PC-3 (cell line): ENCODE measurements at regions of chr19 and their contacts with region 1.

Region 1: GRCh38 chr19:3665681-3666544 is 34.4 kb downstream of the PIP5K1C start:
- DNase-seq: peak; percentile 26
- ATAC-seq: peak; percentile 84
- H3K4me3 ChIP-seq: no peak overlapping the region
- H3K27ac ChIP-seq: no peak overlapping the region
- H3K4me1 ChIP-seq: no peaks in the 10 kb centered on the region
- H3K27me3 ChIP-seq: no peaks in the 10 kb centered on the region
- CTCF ChIP-seq: peak; percentile 83

Region 2: DNA sequence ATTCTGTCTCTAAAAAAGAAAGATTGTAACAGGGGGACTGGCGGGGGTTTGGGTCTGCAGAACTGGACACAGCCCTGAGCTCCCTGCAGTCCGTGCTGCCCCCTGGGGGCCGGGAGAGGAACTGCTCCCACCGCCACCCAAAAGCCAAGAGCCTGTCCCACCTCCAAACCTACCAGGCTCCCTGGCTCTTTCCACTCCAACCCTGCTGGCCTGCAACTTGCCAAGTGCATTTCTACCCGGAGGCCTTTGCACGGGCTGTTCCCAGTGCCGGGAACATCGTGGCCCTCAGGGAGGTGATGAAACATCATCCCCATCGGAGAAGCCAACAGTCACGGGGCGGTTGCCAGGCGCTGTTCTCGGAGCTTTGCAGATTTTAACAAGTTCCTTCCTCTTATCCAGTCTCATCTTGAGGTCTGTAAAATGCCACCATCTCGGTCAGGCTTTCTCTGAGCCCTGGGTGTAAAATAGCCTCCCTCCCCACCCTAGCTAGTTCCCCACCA is 236.3 kb before region 1 on chr19:
- CTCF ChIA-PET with region 1: no interaction called
- POLR2A ChIA-PET with region 1: no interaction called
- intact Hi-C with region 1: no loop called
- DNase-seq: peak; percentile 64
- ATAC-seq: peak; percentile 73
- H3K4me3 ChIP-seq: no peak overlapping the region
- H3K27ac ChIP-seq: no peak overlapping the region
- H3K4me1 ChIP-seq: peaks cover 4% of the 10 kb centered on the region; the same call in 1 of the 2 replicates
- H3K27me3 ChIP-seq: no peaks in the 10 kb centered on the region
- CTCF ChIP-seq: peak; percentile 71

Region 3: GRCh38 chr19:3719868-3720532 is 54.1 kb after region 1 on chr19:
- CTCF ChIA-PET with region 1: no interaction called
- POLR2A ChIA-PET with region 1: no interaction called
- intact Hi-C with region 1: loop called (anchors 2 kb)
- DNase-seq: no peak
- ATAC-seq: no peak
- H3K4me3 ChIP-seq: no peak overlapping the region
- H3K27ac ChIP-seq: no peak overlapping the region
- H3K4me1 ChIP-seq: no peaks in the 10 kb centered on the region; the same call in 1 of the 2 replicates
- H3K27me3 ChIP-seq: no peaks in the 10 kb centered on the region
- CTCF ChIP-seq: no peak